ENCODE measurements at regions of chr6 and their contacts with region 1.

Region 1: GRCh38 chr6:122471107-122472021 is at the start of gene SERINC1:
- DNase-seq: peak; percentile 86
- H3K4me3 Mint-ChIP-seq: peak within 1 kb of the TSS; percentile 100
- H3K27ac Mint-ChIP-seq: peak within 1 kb of the TSS; percentile 100
- H3K4me1 Mint-ChIP-seq: peaks cover 25% of the 10 kb centered on the region
- H3K27me3 Mint-ChIP-seq: peaks cover 2% of the 10 kb centered on the region
- total RNA-seq, gene SERINC1: 43.1 and 47.5 TPM in 2 replicates

Region 2: GRCh38 chr6:121171879-121172278 is 1299.5 kb before region 1 on chr6:
- intact Hi-C with region 1: no loop called
- DNase-seq: no peak
- H3K4me3 Mint-ChIP-seq: no peak overlapping the region
- H3K27ac Mint-ChIP-seq: no peak overlapping the region
- H3K4me1 Mint-ChIP-seq: no peaks in the 10 kb centered on the region
- H3K27me3 Mint-ChIP-seq: no peaks in the 10 kb centered on the region

Region 3: GRCh38 chr6:122381497-122382265 is 89.7 kb before region 1 on chr6:
- intact Hi-C with region 1: loop called (anchors 1 kb)
- DNase-seq: peak; percentile 38
- H3K4me3 Mint-ChIP-seq: no peak overlapping the region
- H3K27ac Mint-ChIP-seq: no peak overlapping the region
- H3K4me1 Mint-ChIP-seq: no peaks in the 10 kb centered on the region
- H3K27me3 Mint-ChIP-seq: peaks cover 14% of the 10 kb centered on the region

Region 4: DNA sequence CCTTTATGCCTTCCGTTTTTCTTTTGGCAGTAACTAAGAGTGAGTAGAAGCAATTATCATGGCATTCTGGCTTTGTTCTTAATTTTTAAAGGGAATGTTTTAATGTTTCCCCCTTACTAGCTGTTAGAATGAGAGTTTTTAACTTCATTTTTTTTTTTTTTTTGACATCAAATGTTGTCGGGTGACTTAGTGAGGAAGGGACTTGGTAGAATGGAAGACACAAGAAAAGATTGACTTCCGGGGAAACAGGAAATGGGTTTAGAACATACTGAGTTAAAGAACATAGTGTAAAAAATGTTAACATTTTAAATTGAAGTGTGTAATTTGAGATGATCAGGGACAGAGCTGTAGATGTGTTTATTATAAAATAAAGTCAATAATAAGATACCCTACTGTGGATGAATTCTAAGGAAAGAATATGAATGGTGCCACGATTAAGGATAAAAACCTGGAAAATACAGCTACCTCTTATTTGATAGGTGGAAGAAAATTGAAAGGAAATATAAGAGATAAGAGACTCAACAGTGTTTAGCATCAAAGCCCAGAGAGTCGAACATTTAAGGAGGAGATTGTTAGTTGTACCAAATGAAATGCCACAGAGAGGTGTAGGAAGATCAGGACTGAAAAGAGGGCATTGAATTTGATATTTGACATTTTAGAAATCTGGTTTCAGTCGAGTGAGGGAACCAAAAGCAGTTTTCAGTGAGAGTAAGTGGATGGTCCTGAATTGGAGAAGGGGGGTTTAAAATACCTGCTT is 62.5 kb before region 1 on chr6:
- intact Hi-C with region 1: loop called (anchors 2 kb)
- DNase-seq: no peak
- H3K4me3 Mint-ChIP-seq: peak overlapping the region; percentile 65
- H3K27ac Mint-ChIP-seq: peak overlapping the region; percentile 72
- H3K4me1 Mint-ChIP-seq: peaks cover 23% of the 10 kb centered on the region
- H3K27me3 Mint-ChIP-seq: no peaks in the 10 kb centered on the region

Region 5: GRCh38 chr6:122491919-122492555 is 20.7 kb after region 1 on chr6:
- intact Hi-C with region 1: loop called (anchors 1 kb)
- DNase-seq: peak; percentile 45
- H3K4me3 Mint-ChIP-seq: no peak overlapping the region
- H3K27ac Mint-ChIP-seq: no peak overlapping the region
- H3K4me1 Mint-ChIP-seq: peaks cover 13% of the 10 kb centered on the region
- H3K27me3 Mint-ChIP-seq: peaks cover 2% of the 10 kb centered on the region

Region 6: DNA sequence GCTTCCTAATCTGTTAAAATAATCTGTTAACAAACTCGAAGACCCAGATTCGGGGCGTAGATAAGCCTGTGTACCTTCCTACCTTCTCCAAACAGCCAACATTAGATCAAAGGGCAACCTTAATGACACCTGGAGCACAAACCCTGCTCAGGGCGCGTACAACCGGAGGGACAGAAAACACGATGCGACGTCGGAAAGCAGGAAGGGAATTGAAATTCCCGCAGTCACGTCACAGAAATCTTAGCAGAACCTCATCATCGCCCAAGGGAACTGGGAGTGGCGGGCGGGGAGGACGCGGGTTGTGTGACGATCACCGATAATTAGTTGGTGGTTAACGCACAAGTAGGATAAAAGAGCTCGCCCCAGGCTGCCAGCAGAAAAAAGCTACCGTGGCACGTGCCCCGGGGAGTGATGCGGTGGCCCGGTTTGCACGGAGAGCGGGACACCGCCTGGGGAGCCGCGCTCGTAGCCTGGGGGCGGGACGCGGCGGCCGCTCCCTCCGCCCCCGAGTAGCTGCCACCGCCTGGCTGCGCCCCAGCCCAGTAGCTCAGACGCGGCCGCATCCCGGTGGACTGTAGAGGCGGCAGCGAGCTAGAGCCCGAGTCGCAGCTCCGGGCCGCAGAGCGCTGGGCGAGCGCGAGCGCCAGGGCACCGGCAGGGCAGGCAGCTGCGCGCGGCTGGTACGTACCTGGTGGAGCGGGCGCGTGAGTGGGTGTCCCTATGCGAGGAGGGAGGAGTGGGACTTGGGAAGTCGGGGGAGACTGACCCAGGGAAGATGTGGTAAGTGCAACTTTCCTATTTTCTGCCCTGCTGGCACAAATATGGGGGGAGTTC is 138.7 kb after region 1 on chr6 and contains the start of gene PKIB:
- intact Hi-C with region 1: loop called (anchors 5 kb)
- DNase-seq: peak; percentile 26
- H3K4me3 Mint-ChIP-seq: peak within 1 kb of the TSS; percentile 81
- H3K27ac Mint-ChIP-seq: no peak within 1 kb of the TSS
- H3K4me1 Mint-ChIP-seq: peaks cover 19% of the 10 kb centered on the region
- H3K27me3 Mint-ChIP-seq: peaks cover 23% of the 10 kb centered on the region
- total RNA-seq, gene PKIB: 0.44 TPM in 1 of 2 replicates, not detected in the other

Measured in activated T-helper 1 cell treated with anti-CD3 and anti-CD28 coated beads, Interleukin-12 subunit alpha, Interleukin-12 subunit beta, Interleukin-2, Interleukin-4 antibody, amounts not matched to agents 30 ng/mL and 10 ng/mL and 1 ng/mL, durations not matched to agents 14 hours and 24 hours and 36 hours (primary cell).